GM13976 (cell line): ENCODE measurements at regions of chrX and their contacts with region 1.

Region 1: DNA sequence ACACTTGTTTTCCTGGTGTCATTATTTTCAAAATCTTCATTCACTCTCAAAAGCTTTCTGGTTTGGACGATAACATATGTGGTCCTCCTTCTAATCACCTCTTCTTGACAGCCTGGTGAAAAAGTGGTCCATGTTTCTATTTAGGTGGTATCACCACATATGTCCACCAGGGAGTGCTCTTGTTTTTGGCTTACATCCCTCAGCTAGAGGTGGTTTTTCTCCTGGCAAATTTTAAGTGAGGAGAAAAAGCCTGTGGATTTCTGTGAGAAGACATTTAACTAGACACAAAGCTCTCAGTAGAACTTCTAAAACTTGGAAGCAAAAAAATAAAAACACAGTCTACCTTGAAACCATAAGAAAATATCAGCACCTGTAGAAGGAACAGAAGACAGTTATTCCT is 58.0 kb upstream of the FRMPD4 start:
- DNase-seq: peak; percentile 18
- CTCF ChIP-seq: peak; percentile 35

Region 2: DNA sequence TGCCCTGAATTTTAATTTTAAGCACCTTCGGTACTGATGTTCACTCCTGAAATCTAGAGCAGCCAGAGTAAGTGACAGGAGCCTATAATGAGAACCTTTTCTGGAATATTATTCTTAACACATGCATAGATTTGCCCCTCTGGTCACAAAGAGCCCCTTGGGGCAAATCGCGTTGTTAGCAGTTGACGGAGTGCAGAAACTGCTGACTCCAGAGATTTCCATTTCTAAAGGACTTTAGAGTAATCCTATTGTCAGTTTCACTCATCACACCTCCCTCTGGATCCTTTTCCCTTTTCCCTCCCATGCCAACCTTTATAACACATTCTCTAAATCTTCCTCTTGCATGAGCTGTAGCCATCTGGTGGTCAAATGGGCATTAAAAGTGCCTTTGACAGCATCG is 446.0 kb after region 1 on chrX:
- in situ Hi-C with region 1: no loop called
- DNase-seq: no peak
- CTCF ChIP-seq: no peak

Region 3: GRCh38 chrX:12701628-12702027 is 621.4 kb after region 1 on chrX:
- in situ Hi-C with region 1: loop called (anchors 25 kb)
- DNase-seq: peak; percentile 33
- CTCF ChIP-seq: peak; percentile 44

Region 4: GRCh38 chrX:12770440-12770839 is 690.2 kb after region 1 on chrX:
- in situ Hi-C with region 1: no loop called
- DNase-seq: no peak
- CTCF ChIP-seq: peak; percentile 43